Activated B cell treated with CpG ODN at 0.5 μM for 24 hours (primary cell): ENCODE measurements at regions of chr2 and their contacts with region 1.

Region 1: DNA sequence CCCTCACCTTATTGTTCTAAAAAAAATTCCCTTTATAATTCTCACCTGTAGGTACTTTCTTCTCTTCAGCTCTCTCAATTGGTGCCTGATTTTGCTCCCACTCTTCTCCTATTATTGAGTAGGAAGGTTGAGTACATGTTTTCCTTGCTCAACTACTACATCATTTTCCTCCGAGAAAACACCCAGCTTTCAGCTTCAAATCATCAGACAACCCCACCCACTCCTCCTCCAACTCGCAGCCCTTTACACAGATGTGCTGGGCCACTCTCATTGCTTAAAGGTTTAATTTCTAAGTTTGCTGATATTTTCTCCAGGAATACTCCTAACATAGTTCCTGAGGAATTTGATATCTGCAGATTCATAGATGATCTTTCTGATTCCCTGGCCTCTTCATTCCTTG is 734.4 kb upstream of the ZEB2 start:
- DNase-seq: no peak
- ATAC-seq: no peak
- H3K4me3 Mint-ChIP-seq: no peak overlapping the region
- H3K27ac Mint-ChIP-seq: no peak overlapping the region
- H3K4me1 Mint-ChIP-seq: peaks cover 9% of the 10 kb centered on the region
- H3K27me3 Mint-ChIP-seq: peaks cover 4% of the 10 kb centered on the region
- CTCF ChIP-seq: no peak

Region 2: DNA sequence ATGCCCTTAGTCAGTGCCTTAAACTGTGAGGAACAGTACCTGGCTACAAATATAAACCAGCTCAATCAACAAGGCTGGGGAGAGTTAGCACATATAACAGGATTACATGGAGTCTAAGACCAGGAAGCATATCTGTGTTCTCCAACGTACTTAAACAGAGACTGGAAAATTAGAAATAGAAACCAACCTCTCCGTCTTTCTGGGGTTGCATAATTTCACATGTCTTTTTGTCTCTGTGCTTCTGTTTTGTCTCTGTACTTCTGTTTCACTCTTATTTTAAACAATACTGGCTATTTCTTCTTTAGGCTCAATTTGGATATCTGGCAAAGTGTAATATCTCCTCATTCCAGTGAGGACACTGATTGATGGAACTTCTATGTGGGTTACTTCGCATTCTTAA is 14.6 kb after region 1 on chr2:
- CTCF ChIA-PET with region 1: no interaction called
- POLR2A ChIA-PET with region 1: interaction called, 4 read pairs
- intact Hi-C with region 1: loop called (anchors 2 kb)
- DNase-seq: no peak
- ATAC-seq: no peak
- H3K4me3 Mint-ChIP-seq: no peak overlapping the region
- H3K27ac Mint-ChIP-seq: no peak overlapping the region
- H3K4me1 Mint-ChIP-seq: no peaks in the 10 kb centered on the region
- H3K27me3 Mint-ChIP-seq: no peaks in the 10 kb centered on the region
- CTCF ChIP-seq: no peak

Region 3: GRCh38 chr2:145919477-145919876 is 665.2 kb after region 1 on chr2:
- CTCF ChIA-PET with region 1: no interaction called
- POLR2A ChIA-PET with region 1: no interaction called
- intact Hi-C with region 1: no loop called
- DNase-seq: no peak
- ATAC-seq: no peak
- H3K4me3 Mint-ChIP-seq: no peak overlapping the region
- H3K27ac Mint-ChIP-seq: no peak overlapping the region
- H3K4me1 Mint-ChIP-seq: peaks cover 6% of the 10 kb centered on the region
- H3K27me3 Mint-ChIP-seq: no peaks in the 10 kb centered on the region
- CTCF ChIP-seq: no peak